ENCODE measurements at regions of chr19 and their contacts with region 1.

Region 1: GRCh38 chr19:2820112-2820702 is 539 bp downstream of the ZNF554 start:
- DNase-seq: no peak
- H3K4me3 Mint-ChIP-seq: peak overlapping the region; percentile 76
- H3K27ac Mint-ChIP-seq: no peak overlapping the region
- H3K4me1 Mint-ChIP-seq: peaks cover 3% of the 10 kb centered on the region
- H3K27me3 Mint-ChIP-seq: no peaks in the 10 kb centered on the region

Region 2: DNA sequence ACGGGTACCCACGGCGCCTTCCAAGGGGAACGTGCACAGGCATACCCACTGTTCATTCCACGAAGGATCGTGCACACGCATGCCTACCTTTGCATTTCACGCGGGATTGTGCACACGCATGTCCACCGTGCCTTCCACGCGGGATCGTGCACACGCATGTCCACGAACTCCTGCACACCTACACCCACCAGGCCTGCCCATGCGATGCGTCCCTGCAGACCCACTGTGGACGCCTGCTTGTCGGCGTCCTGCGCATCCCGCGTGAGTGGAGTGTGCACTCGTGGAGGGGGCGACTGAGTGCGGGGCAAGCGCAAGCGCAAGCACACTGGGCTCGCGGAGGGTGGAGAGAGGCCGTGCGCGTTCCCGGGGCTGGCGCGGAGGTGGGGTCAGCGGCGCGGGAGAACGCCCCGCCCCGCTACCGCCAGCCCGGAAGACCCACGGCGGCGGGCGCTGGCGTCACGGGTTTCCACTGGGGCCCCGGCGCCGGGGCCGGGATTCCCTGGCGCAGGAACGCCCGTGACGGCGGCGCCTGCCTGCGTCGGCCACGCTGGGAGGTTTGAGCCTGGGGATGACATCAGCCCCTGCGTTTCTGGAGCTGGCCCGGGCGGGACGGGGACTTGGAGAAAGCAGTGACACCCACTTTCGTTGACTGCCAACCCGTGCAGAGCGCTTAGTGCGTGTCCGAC is 325.6 kb before region 1 on chr19:
- CTCF ChIA-PET with region 1: no interaction called
- POLR2A ChIA-PET with region 1: no interaction called
- DNase-seq: peak; percentile 69
- H3K4me3 Mint-ChIP-seq: peak overlapping the region; percentile 73
- H3K27ac Mint-ChIP-seq: peak overlapping the region; percentile 65
- H3K4me1 Mint-ChIP-seq: peaks cover 45% of the 10 kb centered on the region
- H3K27me3 Mint-ChIP-seq: peaks cover 38% of the 10 kb centered on the region

Region 3: GRCh38 chr19:2750808-2751443 is 69.3 kb before region 1 on chr19:
- CTCF ChIA-PET with region 1: no interaction called
- POLR2A ChIA-PET with region 1: no interaction called
- DNase-seq: no peak
- H3K4me3 Mint-ChIP-seq: no peak overlapping the region
- H3K27ac Mint-ChIP-seq: no peak overlapping the region
- H3K4me1 Mint-ChIP-seq: peaks cover 1% of the 10 kb centered on the region
- H3K27me3 Mint-ChIP-seq: no peaks in the 10 kb centered on the region

Region 4: GRCh38 chr19:2840794-2841790 is 20.9 kb after region 1 on chr19 and contains the start of gene ZNF555:
- CTCF ChIA-PET with region 1: interaction called, 12 read pairs
- POLR2A ChIA-PET with region 1: no interaction called
- DNase-seq: peak; percentile 97
- H3K4me3 Mint-ChIP-seq: peak within 1 kb of the TSS; percentile 85
- H3K27ac Mint-ChIP-seq: peak within 1 kb of the TSS; percentile 52
- H3K4me1 Mint-ChIP-seq: peaks cover 12% of the 10 kb centered on the region
- H3K27me3 Mint-ChIP-seq: no peaks in the 10 kb centered on the region
- total RNA-seq, gene ZNF555: 2.7 to 2.9 TPM

Region 5: DNA sequence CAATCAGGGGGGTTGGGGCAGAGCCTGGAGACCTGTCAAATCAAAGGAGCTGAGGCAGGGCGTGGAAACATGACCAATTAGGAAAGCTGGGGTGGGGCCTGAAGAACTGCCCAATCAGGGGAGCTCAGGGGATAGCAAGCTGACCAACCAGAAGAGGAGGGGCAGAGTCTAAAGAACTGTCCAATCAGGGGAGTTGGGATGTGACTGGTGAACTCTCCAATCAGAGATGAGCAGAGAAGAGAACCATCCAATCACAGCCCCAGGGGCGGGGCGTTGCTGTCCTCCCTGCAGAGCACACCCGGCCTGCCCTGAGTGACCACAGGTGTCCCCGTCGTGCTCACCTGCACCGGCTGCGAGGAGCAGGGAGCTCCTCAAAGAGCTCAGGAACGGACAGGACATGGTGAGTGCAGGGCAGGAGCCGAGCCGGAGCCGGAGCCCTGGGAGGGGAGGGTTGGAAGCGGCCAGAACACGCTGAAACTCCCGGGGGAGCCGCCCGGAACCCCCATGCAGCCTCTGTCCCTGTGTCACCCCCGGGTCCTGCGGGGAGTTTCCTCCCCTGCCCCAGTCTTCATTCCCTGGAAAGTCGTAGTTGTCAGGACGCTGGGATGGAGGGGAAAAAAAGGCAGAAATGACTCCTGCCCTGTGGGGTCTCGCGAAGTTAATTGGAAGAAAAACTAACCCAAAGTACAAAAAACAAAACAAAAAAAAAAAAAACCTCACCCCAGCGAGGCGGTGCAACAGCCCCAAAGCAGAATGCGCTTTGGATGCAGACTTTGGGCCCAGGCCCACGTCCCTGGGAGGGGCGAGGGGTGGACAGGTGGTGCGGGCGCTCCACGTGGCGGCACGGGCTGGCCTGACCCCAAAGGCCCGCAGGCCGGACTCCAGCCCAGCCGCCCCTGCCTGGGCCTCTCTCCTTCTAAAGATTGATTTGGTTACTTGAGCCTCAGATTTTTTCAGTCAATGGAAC is 47.1 kb after region 1 on chr19 and contains the start of gene ZNF556:
- CTCF ChIA-PET with region 1: no interaction called
- POLR2A ChIA-PET with region 1: no interaction called
- DNase-seq: no peak
- H3K4me3 Mint-ChIP-seq: no peak within 1 kb of the TSS
- H3K27ac Mint-ChIP-seq: no peak within 1 kb of the TSS
- H3K4me1 Mint-ChIP-seq: no peaks in the 10 kb centered on the region
- H3K27me3 Mint-ChIP-seq: no peaks in the 10 kb centered on the region
- total RNA-seq, gene ZNF556: not detected

Region 6: GRCh38 chr19:2912306-2912705 is 92.1 kb after region 1 on chr19:
- CTCF ChIA-PET with region 1: no interaction called
- POLR2A ChIA-PET with region 1: no interaction called
- DNase-seq: no peak
- H3K4me3 Mint-ChIP-seq: no peak overlapping the region
- H3K27ac Mint-ChIP-seq: peak overlapping the region; percentile 48
- H3K4me1 Mint-ChIP-seq: peaks cover 22% of the 10 kb centered on the region
- H3K27me3 Mint-ChIP-seq: no peaks in the 10 kb centered on the region